RWPE1 (cell line): ENCODE measurements at regions of chr1 and their contacts with region 1.

Region 1: DNA sequence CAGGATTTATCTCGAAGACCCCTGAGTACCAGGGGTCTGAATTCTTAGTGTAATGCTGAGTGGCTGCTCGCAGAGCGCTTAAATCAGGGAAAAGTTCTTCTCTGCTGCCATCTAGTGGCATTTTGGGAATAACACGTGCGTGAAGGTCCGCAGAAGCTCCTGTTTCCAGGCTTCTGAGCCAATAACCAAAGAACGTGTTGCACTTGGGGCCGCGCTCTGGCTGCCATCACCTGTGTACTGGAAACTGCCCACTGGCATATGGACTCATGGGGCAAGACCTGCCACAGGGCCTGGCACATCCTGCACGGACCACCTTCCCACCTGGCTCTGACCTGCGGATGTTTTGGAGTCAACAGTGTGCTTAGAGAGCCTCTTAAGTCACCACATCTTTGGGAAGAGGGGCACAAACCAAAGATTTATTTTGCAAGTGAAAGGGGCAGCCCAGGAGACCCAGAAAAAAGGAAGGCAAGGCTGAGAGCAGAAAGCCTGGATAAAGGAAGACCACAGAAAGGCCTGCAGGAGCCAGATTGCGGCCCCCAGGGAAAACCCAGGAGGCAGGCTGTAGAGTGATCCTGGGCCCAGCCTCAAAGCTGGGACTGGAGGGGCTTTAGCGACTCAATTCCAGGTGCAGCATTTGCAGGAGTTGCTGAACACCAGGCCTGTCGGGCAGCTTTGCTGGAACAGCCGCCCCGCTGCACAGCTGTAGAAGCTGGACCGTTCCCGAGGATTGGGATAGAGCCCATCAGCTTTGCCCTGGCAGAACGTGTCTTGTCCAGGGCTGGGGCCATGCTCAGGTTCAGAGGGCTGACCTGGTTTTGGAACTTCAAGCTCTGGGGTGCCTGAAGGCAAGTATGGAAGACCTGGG is 13.0 kb downstream of the CHIT1 start:
- DNase-seq: peak; percentile 77
- H3K27ac ChIP-seq: no peak overlapping the region
- CTCF ChIP-seq: peak; percentile 72

Region 2: GRCh38 chr1:203026031-203026989 is 190.2 kb before region 1 on chr1 and contains the start of gene PPFIA4:
- CTCF ChIA-PET with region 1: interaction called, 11 read pairs
- POLR2A ChIA-PET with region 1: no interaction called
- DNase-seq: peak; percentile 99
- H3K27ac ChIP-seq: peak within 1 kb of the TSS; percentile 42; the same call in 1 of the 2 replicates
- CTCF ChIP-seq: peak; percentile 23; the same call in 1 of the 2 replicates

Region 3: DNA sequence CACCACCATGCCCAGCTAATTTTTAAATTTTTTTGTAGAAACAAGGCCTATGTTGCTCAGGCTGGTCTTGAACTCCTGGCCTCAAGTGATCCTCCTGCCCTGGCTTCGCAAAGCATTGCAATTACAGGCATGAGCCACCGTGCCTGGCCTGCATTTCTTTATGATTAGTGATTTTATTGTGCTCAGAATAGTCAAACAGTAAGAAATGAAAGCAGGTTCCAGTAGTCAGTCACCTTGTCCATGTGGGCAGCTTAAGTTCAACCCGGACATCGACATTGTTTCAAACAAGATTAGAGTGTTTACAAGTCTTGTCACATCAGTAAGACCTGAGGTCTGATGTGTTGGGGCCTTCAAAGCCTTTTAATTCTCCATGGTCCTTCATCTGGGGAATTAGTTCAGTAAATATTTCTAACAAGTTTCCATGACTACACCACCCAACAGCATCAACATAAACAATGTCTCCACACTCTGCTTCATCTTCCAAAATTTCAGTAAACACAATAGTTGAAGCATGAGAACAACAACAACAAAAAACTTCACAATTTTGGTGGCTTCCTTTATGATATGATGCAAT is 104.1 kb before region 1 on chr1:
- CTCF ChIA-PET with region 1: interaction called, 49 read pairs
- POLR2A ChIA-PET with region 1: no interaction called
- DNase-seq: no peak
- H3K27ac ChIP-seq: no peak overlapping the region
- CTCF ChIP-seq: no peak

Region 4: GRCh38 chr1:203166566-203166940 is 50.0 kb before region 1 on chr1:
- CTCF ChIA-PET with region 1: interaction called, 45 read pairs
- POLR2A ChIA-PET with region 1: no interaction called
- DNase-seq: peak; percentile 46
- H3K27ac ChIP-seq: no peak overlapping the region
- CTCF ChIP-seq: no peak

Region 5: GRCh38 chr1:203177470-203178039 is 39.0 kb before region 1 on chr1:
- CTCF ChIA-PET with region 1: interaction called, 35 read pairs
- POLR2A ChIA-PET with region 1: no interaction called
- DNase-seq: no peak
- H3K27ac ChIP-seq: no peak overlapping the region
- CTCF ChIP-seq: no peak

Region 6: DNA sequence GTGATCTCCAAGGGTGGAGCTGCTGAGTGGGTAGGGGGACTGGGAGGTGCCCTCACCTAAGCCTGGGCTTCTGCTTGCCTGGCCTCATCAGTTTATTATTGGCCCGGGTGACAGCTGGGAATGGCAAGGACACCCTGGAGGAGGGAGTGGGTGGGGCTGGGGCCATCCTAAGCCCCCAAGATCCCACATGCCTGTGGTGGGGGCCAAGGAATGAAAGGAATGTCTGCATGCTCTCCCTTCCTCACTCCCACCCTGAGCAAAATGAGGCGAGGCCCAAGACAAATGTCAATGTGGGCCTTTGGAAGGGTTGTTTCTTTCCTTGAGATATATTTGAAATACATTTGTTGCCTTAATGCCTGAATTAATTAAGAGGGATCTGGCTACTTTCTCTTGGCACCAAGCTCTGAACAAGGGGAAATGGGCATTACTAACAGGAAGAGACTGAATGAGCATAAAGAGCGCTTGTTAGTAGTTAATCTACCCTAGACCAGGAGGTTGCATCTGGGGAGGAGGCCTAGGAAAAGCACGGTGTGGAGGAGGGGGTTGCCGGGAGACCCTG is 10.3 kb before region 1 on chr1:
- CTCF ChIA-PET with region 1: interaction called, 19 read pairs
- POLR2A ChIA-PET with region 1: no interaction called
- DNase-seq: no peak
- H3K27ac ChIP-seq: no peak overlapping the region
- CTCF ChIP-seq: no peak